Breast epithelium (tissue), 4 donors: ENCODE measurements at regions of chr12 and their contacts with region 1.

Region 1: DNA sequence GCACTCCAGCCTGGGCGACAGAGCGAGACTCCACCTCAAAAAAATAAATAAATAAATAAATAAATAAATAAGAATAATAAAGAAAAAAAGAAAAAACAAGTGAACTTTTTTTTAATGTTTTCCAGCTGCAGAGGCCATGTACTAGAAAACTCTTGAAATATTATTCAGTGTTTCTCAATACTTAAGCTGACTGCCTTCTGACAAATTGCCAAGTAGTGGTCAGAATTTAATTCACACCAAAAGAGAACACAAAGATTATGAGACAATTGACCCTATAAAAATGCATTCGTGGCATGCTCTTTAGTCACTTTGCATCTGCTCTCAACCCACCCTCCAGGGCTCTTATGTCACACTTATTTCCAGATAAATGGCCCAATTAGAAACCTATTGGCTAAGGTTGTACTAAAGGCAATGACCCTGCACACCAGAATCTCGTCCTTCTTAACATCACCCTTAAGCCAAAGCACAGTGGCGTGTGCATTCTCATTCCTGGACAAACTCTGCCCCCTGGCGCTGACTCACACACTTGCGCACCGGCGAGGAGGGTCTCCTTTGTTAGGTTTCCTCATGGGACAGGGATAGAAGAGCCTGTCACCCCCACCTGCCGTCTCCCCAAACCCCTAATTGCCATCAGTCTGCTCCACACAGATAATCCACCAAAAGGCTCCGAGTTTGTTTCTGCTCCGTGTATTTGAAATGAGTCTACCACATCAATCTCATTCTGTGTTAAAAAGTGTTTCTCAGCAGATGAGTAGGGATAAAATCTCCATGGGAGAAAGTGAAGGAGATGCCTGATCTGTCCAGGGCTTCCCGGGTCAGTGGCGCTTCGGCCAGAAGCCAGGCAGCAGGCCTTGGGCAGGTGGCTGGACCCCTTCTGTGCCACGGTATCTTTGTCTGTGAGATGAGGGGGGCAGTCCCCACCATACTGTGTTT is 73.1 kb upstream of the CEP83 start:
- DNase-seq: peak in 1 of 2 donors; percentile 31
- H3K4me3 ChIP-seq: no peak overlapping the region
- H3K27ac ChIP-seq: peak overlapping the region in 1 of 2 donors; percentile 20
- H3K4me1 ChIP-seq: no peaks in the 10 kb centered on the region
- H3K27me3 ChIP-seq: no peaks in the 10 kb centered on the region
- CTCF ChIP-seq: peak; percentile 40 to 81 (median 67)
- POLR2A ChIP-seq: no peak

Region 2: DNA sequence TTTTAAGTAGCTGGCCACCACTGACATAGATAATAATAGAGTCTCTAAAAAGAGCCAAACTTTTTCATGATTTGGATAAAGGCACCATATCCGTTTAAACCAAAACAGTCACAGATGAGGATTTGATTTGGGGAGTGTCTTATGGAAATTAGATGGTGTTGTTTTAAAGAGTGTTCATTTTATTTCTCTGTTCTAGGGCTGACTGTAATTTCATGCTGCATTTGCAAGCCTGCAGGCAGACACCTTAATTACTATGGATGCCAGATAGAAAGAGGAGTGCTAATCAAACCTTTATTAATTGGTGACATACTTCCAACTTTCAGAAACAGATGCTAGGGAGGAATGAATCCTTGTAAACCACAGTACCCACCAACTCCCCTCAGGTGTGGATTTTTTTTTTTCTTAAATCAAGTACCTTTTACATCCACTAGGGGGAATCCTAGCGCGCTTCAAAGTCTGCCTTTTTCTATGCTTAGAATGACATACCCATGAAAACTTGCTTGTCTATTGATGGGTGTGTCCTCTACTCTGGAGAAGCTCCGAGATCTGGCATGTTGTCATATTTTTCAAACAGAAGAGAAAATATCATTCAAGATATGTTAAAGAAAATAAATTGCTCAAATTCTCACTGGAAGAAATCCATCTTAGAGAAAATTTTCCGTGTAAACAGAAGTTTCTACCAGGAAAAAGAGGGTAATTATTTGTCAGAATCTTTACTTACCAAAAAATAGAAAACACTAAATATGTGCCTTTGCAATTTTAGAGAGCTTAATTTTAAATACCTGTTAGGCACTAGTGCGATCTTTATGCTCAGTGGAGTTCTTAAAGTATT is 398.6 kb before region 1 on chr12:
- intact Hi-C with region 1: loop called (anchors 5 kb)
- DNase-seq: no peak
- H3K4me3 ChIP-seq: no peak overlapping the region
- H3K27ac ChIP-seq: no peak overlapping the region
- H3K4me1 ChIP-seq: no peaks in the 10 kb centered on the region
- H3K27me3 ChIP-seq: no peaks in the 10 kb centered on the region
- CTCF ChIP-seq: peak; percentile 62 to 81 (median 73)
- POLR2A ChIP-seq: no peak

Region 3: DNA sequence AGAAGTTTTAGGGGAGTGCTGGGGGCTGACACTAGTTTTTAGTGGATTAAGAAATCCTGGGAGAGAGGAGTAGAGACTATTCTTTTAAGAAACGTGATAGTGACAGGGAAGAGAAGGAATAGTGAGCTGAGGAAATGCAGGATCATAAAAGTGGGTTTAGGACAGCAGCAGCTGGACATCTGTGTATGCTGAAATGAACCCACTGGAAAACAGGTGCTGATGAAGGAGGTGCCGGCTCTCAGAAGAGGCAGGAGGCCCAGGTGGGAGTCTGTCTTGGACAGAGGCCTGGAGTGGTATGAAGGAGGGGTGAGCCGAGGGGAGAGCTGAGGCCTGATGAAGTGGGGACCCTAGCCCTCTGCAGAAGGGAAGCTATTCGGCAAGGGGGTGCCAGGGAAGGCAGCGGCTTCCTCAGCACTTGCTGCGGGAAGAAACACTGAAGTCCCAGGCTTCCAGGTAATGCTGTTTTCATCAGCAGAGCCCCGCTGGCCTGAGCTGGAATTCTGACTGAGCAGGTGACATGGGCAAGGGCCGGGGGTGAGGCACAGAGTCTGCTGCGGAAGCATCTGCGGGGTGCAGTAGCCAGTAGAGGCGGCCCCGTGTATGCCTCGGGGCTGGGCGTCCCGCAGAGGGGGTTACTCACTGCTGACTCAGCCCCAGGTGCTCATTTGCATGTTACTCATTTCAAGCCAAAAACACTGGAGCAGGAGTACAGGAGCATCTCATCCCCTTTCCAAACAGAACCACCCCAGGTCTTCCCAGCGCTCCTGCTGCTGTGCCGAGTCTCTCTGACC is 27.9 kb after region 1 on chr12:
- intact Hi-C with region 1: no loop called
- DNase-seq: peak in 1 of 2 donors; percentile 24
- H3K4me3 ChIP-seq: no peak overlapping the region
- H3K27ac ChIP-seq: no peak overlapping the region
- H3K4me1 ChIP-seq: no peaks in the 10 kb centered on the region
- H3K27me3 ChIP-seq: no peaks in the 10 kb centered on the region
- CTCF ChIP-seq: no peak
- POLR2A ChIP-seq: no peak

Region 4: DNA sequence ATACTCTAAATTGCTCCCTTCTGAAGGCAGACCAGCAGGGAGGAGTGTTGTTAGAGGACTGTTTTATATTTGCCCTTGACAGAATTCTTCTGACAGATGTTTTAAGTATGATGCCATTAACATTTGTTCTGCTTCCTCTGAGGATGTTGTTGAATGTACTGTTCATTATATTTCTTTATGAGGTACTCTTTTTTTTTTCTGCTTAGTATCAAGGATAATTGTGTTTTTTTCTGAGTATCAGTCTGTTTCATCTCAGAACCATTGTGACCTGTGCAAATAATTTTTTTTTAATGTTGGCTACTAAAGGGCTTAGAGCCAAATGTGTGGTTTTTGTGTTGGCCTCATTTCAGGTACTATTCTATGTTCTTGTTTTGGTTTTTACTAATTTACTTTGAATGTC is 951.8 kb after region 1 on chr12:
- intact Hi-C with region 1: no loop called
- DNase-seq: no peak
- H3K4me3 ChIP-seq: no peak overlapping the region
- H3K27ac ChIP-seq: peak overlapping the region in 1 of 2 donors; percentile 27
- H3K4me1 ChIP-seq: no peaks in the 10 kb centered on the region
- H3K27me3 ChIP-seq: no peaks in the 10 kb centered on the region
- CTCF ChIP-seq: no peak
- POLR2A ChIP-seq: no peak